Heart right ventricle (tissue), 16 donors: ENCODE measurements at regions of chr1 and their contacts with region 1.

Region 1: GRCh38 chr1:167273027-167273800 is 52.5 kb downstream of the POU2F1 start:
- DNase-seq: peak in 1 of 2 donors; percentile 8
- ATAC-seq: peak in 6 of 8 donors; percentile 28 to 69 (median 60)
- H3K4me3 ChIP-seq: no peak overlapping the region
- H3K27ac ChIP-seq: no peak overlapping the region
- H3K4me1 ChIP-seq: peaks cover 0 to 52% (median 23%) of the 10 kb centered on the region in 9 donors
- H3K27me3 ChIP-seq: no peaks in the 10 kb centered on the region
- CTCF ChIP-seq: no peak

Region 2: GRCh38 chr1:167297222-167298214 is 24.3 kb after region 1 on chr1:
- intact Hi-C with region 1: no loop called
- DNase-seq: no peak
- ATAC-seq: peak in 4 of 8 donors; percentile 63 to 91 (median 66)
- H3K4me3 ChIP-seq: no peak overlapping the region
- H3K27ac ChIP-seq: peak overlapping the region in 6 of 10 donors; percentile 3 to 79 (median 38)
- H3K4me1 ChIP-seq: peaks cover 0 to 37% (median 19%) of the 10 kb centered on the region in 9 donors
- H3K27me3 ChIP-seq: no peaks in the 10 kb centered on the region
- CTCF ChIP-seq: no peak

Region 3: GRCh38 chr1:167360120-167360519 is 86.9 kb after region 1 on chr1:
- intact Hi-C with region 1: no loop called
- DNase-seq: no peak
- ATAC-seq: no peak
- H3K4me3 ChIP-seq: no peak overlapping the region
- H3K27ac ChIP-seq: no peak overlapping the region
- H3K4me1 ChIP-seq: no peaks in the 10 kb centered on the region
- H3K27me3 ChIP-seq: no peaks in the 10 kb centered on the region
- CTCF ChIP-seq: no peak

Region 4: DNA sequence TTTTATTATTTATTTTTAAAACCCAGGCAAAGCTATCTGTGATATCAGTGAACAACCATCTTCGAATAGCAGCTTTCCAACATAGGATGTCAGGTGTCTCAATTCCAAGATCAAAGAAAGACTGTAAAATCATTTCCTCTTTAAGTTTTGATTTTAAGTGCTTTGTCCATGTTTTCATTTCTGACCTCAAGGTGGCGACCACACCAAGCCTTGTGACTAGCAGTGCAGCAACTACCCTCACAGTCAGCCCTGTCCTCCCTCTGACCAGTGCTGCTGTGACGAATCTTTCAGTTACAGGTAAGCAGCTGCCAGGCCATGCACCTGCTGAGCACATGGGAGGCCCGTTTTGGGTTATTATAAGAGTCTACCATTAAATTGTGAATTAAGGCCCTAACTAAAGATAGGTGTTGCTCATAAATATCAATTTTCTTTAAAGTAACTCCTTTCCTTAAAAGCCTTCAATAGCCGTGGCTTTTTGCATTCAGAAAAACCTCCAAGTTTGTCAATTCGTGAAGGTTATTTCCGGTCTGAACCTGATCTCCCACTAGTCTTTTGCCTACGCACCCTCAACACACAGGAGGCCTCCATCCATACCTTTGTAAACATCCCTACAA is 128.2 kb after region 1 on chr1:
- intact Hi-C with region 1: loop called in 1 of 10 experiments (anchors 10 kb)
- DNase-seq: peak in 1 of 2 donors; percentile 27
- ATAC-seq: peak in 3 of 8 donors; percentile 55
- H3K4me3 ChIP-seq: no peak overlapping the region
- H3K27ac ChIP-seq: no peak overlapping the region
- H3K4me1 ChIP-seq: peaks cover 0 to 10% (median 0%) of the 10 kb centered on the region in 9 donors
- H3K27me3 ChIP-seq: no peaks in the 10 kb centered on the region
- CTCF ChIP-seq: peak; percentile 16 to 67 (median 52)

Region 5: DNA sequence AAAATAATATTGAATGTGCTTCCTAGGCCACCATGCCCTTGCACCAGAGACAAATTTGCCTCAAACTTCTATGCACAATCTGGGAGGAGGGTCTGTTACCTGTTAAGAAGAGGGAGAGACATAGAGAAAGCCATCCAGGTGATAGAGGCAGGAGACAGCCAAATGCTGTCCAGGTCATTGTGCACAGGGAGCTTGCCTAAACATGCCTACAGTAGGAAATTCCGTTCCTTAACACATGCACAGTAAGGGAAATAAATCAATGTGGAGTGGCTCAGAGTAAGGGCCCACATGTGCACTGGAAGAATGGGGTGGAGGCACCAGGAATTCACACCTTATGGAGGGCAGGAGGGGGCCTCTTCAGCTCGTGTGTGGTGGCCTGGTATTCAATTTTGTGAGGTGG is 299.8 kb after region 1 on chr1:
- intact Hi-C with region 1: no loop called
- DNase-seq: no peak
- ATAC-seq: no peak
- H3K4me3 ChIP-seq: no peak overlapping the region
- H3K27ac ChIP-seq: no peak overlapping the region
- H3K4me1 ChIP-seq: peaks cover 0 to 4% (median 0%) of the 10 kb centered on the region in 9 donors
- H3K27me3 ChIP-seq: no peaks in the 10 kb centered on the region
- CTCF ChIP-seq: no peak

Region 6: DNA sequence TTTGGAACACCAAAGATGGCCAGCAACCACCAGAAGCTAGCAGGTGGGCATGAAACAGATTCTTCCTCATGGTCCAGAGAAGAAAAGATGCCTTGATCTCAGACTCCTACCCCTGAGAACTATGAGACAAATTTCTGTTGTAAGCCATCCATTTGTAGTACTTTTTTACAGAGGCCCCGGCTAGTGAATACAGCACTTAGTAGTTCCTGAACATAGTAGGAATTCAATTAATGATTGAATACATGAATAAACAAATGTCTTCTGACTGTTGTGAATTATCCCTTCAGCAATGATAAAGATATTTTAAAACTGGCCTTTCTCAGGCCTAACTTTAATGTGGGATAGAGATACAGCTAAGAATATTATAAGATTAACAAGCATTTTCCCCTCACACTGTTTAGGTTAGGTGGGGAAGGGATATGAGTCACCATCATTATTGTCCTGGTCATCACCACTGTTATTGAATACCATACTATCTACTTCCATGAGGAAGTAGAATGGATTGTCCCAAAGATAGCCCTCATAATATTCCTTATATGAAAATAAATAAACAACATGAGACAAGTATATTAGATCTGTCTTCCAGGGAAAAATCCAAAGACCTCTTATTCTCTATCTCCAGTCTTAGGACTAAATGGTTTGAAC is 589.3 kb after region 1 on chr1:
- intact Hi-C with region 1: no loop called
- DNase-seq: no peak
- ATAC-seq: no peak
- H3K4me3 ChIP-seq: no peak overlapping the region
- H3K27ac ChIP-seq: no peak overlapping the region
- H3K4me1 ChIP-seq: peaks cover 0 to 5% (median 0%) of the 10 kb centered on the region in 9 donors
- H3K27me3 ChIP-seq: no peaks in the 10 kb centered on the region
- CTCF ChIP-seq: no peak